ENCODE measurements at regions of chr7 and their contacts with region 1.

Region 1: DNA sequence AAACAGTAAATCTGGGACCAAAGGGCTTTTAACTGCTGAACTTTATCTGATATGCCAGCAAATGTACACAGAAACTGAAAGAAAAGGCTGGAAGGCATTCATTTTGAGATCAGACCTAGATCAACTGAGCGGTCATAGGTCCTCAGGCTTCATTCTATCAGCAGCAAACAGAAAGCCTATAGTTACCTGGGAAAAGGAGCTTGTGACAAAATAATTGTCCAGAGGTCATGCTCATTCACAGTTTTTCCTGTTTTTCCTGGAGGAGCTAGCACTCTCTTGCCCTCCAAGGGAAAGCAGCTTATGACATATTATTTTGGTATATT is 320.2 kb downstream of the AHR start:
- DNase-seq: no peak
- CTCF ChIP-seq: no peak

Region 2: GRCh38 chr7:17408245-17408903 is 210.2 kb before region 1 on chr7:
- CTCF ChIA-PET with region 1: no interaction called
- POLR2A ChIA-PET with region 1: no interaction called
- DNase-seq: no peak
- CTCF ChIP-seq: no peak

Region 3: GRCh38 chr7:17633099-17633498 is 14.5 kb after region 1 on chr7:
- CTCF ChIA-PET with region 1: interaction called, 20 read pairs
- POLR2A ChIA-PET with region 1: no interaction called
- DNase-seq: no peak
- CTCF ChIP-seq: no peak